ENCODE measurements at regions of chr10 and their contacts with region 1.

Region 1: DNA sequence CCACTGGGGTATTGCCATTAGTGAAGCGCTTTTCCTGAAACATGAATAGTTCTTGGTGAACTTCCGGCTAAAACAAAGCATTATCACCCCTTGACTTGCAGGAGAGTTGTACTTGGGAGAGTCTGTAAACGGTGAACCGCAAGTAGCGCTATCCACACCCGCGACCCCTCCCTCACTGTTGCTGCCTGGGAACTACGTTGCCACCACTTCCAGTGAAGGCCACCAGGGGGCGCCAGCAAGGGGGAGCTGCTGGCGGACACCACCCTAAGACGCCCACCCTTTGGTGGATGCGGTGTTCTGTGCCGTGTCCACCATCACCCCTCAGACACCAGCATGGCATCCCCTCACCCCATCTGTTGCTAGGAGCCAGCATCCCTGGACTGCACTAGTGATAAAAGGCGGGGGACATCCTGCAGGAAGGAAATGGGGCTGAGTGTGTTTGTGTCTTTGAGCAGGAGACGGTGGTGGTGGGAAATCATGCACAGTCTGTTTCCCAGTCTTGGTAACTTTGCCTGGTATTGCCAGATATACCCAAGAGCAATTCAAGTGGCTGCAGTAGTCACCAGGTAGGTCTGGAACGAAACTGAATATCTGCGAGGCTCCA is 298.2 kb downstream of the FRMD4A start:
- DNase-seq: peak; percentile 29
- H3K4me3 ChIP-seq: no peak overlapping the region
- H3K27ac ChIP-seq: no peak overlapping the region
- H3K4me1 ChIP-seq: no peaks in the 10 kb centered on the region
- H3K27me3 ChIP-seq: peaks cover 5% of the 10 kb centered on the region
- CTCF ChIP-seq: peak; percentile 88

Region 2: DNA sequence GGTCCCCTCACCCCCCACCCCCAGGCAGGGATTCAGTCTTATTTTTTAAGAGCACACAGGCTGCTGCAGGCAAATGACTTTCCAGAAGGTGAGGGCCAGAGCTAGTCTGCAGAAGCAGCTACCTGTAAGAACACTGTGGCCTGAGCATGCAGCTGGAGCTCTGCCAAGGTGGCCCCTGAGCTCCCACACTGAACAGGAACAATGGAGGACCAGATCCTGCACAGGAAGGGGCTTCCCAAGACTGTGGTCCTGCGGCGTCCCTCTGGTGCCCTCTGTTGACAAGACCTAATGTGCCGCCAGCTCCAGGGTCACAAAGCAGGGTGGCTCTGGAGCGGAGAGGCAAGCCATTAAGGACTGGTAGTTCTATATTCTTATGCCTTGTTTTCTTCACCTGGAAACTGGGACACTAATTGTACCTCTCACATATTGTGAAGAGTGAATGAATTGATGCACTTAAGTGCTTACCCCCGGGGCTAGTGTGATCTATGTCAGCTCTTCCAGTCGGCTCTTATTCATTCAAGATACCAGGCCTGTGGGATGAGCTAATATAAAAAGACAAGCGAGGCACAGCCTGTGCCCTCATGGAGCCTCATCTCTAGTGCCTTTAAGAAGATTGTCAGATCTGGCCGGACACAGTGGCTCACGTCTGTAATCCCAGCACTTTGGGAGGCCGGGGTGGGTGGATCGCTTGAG is 495.7 kb before region 1 on chr10:
- CTCF ChIA-PET with region 1: no interaction called
- POLR2A ChIA-PET with region 1: no interaction called
- intact Hi-C with region 1: no loop called
- DNase-seq: peak; percentile 77
- H3K4me3 ChIP-seq: no peak overlapping the region
- H3K27ac ChIP-seq: no peak overlapping the region
- H3K4me1 ChIP-seq: no peaks in the 10 kb centered on the region
- H3K27me3 ChIP-seq: peaks cover 19% of the 10 kb centered on the region
- CTCF ChIP-seq: peak; percentile 80

Region 3: DNA sequence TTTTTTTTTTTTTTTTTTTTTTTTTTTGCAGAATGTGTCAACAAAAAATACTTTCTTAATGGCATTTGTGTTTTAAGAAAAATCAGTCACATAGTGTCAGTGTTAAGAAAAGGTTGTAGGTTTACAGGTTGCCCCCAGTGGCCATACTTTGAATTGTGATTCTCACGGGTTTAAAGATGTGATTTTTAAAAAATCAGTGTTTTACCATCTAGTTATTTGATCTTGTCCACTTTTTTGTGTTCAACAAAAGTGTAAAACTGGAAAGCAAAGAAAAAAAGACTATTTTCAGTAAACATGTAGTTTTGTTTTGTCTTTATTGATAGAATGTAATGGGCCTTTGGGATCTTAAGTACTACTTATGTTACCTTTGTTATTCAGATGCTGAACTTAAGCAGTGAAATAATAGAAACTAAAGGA is 871.8 kb after region 1 on chr10:
- CTCF ChIA-PET with region 1: no interaction called
- POLR2A ChIA-PET with region 1: interaction called, 26 read pairs
- intact Hi-C with region 1: no loop called
- DNase-seq: peak; percentile 49
- H3K4me3 ChIP-seq: no peak overlapping the region
- H3K27ac ChIP-seq: no peak overlapping the region
- H3K4me1 ChIP-seq: no peaks in the 10 kb centered on the region
- H3K27me3 ChIP-seq: no peaks in the 10 kb centered on the region
- CTCF ChIP-seq: peak; percentile 62